ENCODE measurements at regions of chr9 and their contacts with region 1.

Region 1: GRCh38 chr9:19048966-19049916 is at the start of gene RRAGA:
- DNase-seq: peak; percentile 94 to 97 (median 94)
- ATAC-seq: peak; percentile 94 to 97 (median 97)
- H3K4me3 ChIP-seq: peak within 1 kb of the TSS; percentile 71 to 98 (median 88)
- H3K27ac ChIP-seq: peak within 1 kb of the TSS; percentile 84 to 99 (median 97)
- H3K4me1 ChIP-seq: peaks cover 0 to 46% (median 30%) of the 10 kb centered on the region in 12 donors
- H3K27me3 ChIP-seq: no peaks in the 10 kb centered on the region
- CTCF ChIP-seq: peak; percentile 74 to 95 (median 87)
- POLR2A ChIP-seq: peak in 1 of 2 donors; percentile 86
- total RNA-seq, gene RRAGA: 60.1 to 93.3 (median 83.6) TPM

Region 2: GRCh38 chr9:19102631-19103345 is 53.5 kb after region 1 on chr9 and contains the start of gene HAUS6:
- intact Hi-C with region 1: no loop called
- DNase-seq: peak; percentile 97 to 98 (median 98)
- ATAC-seq: peak; percentile 100
- H3K4me3 ChIP-seq: peak within 1 kb of the TSS; percentile 56 to 92 (median 77)
- H3K27ac ChIP-seq: peak within 1 kb of the TSS; percentile 61 to 92 (median 88)
- H3K4me1 ChIP-seq: peaks cover 0 to 24% (median 11%) of the 10 kb centered on the region in 12 donors
- H3K27me3 ChIP-seq: no peaks in the 10 kb centered on the region
- CTCF ChIP-seq: peak; percentile 34 to 65 (median 47)
- POLR2A ChIP-seq: peak in 1 of 2 donors; percentile 64
- total RNA-seq, gene HAUS6: 4.6 to 8.8 (median 7.3) TPM

Region 3: GRCh38 chr9:19127881-19128500 is 78.8 kb after region 1 on chr9:
- intact Hi-C with region 1: loop called in 1 of 10 experiments (anchors 10 kb)
- DNase-seq: peak; percentile 16 to 72 (median 46)
- ATAC-seq: peak; percentile 20 to 43 (median 42)
- H3K4me3 ChIP-seq: peak overlapping the region; percentile 58 to 95 (median 82)
- H3K27ac ChIP-seq: peak overlapping the region; percentile 89 to 100 (median 97)
- H3K4me1 ChIP-seq: peaks cover 4 to 62% (median 26%) of the 10 kb centered on the region in 12 donors
- H3K27me3 ChIP-seq: no peaks in the 10 kb centered on the region
- CTCF ChIP-seq: no peak
- POLR2A ChIP-seq: no peak

Region 4: DNA sequence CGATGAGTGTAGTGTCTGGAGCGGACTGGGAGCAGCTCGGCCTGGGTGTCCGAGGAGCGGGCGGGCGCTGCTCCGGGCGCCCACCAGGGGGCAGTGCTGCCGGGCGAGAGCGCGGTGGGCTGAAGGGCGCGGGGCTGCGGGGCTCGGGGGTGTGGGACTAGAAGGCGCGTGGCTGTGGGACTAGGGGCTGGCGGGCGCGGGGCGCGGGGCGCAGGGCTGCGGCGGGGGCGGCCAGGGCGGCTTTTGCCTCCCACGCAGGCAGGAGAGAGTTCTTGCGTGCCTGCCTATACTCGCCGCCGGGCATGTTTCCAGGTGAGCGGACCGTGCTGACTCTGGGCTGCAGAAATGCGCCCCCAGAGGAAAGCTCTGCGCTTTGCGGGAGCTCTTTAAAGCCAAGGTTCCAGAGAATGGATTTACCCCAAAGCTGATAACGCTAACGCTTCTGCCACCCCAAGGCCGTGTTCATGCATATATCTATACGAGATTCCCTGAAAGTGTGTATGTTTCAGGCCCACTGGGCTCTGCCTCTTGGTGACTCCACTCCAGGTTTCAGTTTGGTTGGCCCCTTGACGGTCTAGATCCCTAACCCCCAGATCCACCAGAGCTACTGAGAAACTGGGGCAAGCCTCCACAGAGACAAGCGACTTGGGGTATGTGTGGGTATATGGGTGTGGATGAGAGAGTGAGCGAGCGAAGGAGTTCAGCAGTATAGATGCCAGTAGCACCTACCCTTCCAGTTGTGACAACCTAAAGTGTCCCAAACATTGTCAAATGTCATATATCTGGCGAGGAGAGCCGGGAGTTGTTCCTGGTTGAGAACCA is 415.7 kb after region 1 on chr9:
- intact Hi-C with region 1: loop called in 1 of 10 experiments (anchors 10 kb)
- DNase-seq: peak; percentile 55 to 84 (median 74)
- ATAC-seq: peak; percentile 36 to 98 (median 86)
- H3K4me3 ChIP-seq: peak overlapping the region; percentile 31 to 69 (median 57)
- H3K27ac ChIP-seq: peak overlapping the region in 3 of 12 donors; percentile 25 to 54 (median 53)
- H3K4me1 ChIP-seq: peaks cover 0 to 12% (median 0%) of the 10 kb centered on the region in 12 donors
- H3K27me3 ChIP-seq: no peaks in the 10 kb centered on the region
- CTCF ChIP-seq: peak; percentile 53 to 93 (median 84)
- POLR2A ChIP-seq: no peak

Measured in heart left ventricle (tissue), 16 donors.